Endothelial cell of umbilical vein (primary cell): ENCODE measurements at regions of chr7 and their contacts with region 1.

Region 1: GRCh38 chr7:133434055-133434865 is 181.4 kb downstream of the EXOC4 start:
- DNase-seq: peak; percentile 65
- H3K4me3 ChIP-seq: no peak overlapping the region
- H3K27ac ChIP-seq: no peak overlapping the region
- H3K4me1 ChIP-seq: peaks cover 11% of the 10 kb centered on the region
- H3K27me3 ChIP-seq: no peaks in the 10 kb centered on the region
- CTCF ChIP-seq: peak; percentile 33 to 34
- POLR2A ChIP-seq: no peak

Region 2: DNA sequence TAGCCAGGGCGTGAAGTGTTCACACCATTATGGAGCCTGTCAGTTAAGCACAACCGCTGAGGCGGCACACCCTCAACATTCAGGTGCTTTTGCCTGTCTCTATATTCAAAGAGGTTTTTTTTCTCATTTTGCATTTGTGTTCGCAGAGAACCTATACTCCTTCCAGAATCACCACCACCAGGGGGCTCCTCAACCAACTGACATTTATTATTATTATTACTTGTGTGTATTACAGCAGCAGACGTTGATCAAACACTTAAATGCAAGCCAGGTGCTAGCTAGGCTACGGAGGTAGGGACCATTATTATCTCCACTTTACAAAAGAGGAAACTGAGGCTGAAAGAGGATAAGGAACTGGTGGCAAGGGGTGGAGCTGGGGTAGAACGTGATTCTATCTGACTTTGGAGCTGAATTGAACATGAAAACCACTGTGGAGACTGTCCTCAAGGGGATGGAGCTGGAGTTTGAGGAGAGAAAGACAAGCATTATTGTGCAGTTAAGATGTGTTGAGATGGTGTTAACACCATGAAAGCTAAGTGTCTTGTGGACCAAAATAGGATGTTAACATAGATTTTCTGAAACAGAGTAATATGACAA is 724.2 kb before region 1 on chr7:
- CTCF ChIA-PET with region 1: interaction called, 104 read pairs
- POLR2A ChIA-PET with region 1: interaction called, 5 read pairs
- dilution Hi-C with region 1: no loop called
- intact Hi-C with region 1: loop called (anchors 1 kb)
- DNase-seq: peak; percentile 59
- H3K4me3 ChIP-seq: no peak overlapping the region
- H3K27ac ChIP-seq: no peak overlapping the region
- H3K4me1 ChIP-seq: no peaks in the 10 kb centered on the region
- H3K27me3 ChIP-seq: peaks cover 0 to 2% of the 10 kb centered on the region in 2 experiments
- CTCF ChIP-seq: peak; percentile 53
- POLR2A ChIP-seq: no peak

Region 3: DNA sequence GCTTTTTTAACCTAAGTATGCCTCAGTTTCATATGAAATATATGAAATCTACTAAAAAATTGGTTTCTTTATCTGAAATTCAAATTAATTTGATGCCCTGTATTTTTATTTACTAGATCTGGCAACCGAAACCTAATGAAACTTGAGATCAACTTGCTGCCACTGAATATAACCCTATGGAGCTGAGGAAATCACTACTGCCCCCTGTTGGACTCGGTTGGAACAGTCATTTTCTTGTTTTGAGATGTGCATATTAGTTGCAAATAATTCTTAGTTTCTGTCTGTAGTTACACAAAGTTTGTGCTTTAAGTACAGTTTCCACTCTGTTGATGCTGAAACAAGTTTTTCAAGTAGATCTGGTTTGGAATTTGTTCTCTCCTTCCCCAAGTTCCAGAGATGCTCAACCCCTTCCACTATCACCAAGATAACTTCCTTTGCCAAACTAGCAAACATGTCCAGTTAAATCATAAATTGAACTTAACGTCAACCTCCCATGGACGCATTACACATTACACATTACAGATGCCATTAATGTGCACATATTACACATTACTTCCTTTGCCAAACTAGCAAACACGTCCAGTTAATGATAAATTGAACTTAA is 203.6 kb before region 1 on chr7:
- CTCF ChIA-PET with region 1: interaction called, 11 read pairs
- POLR2A ChIA-PET with region 1: no interaction called
- dilution Hi-C with region 1: no loop called
- intact Hi-C with region 1: loop called (anchors 2 kb)
- DNase-seq: peak; percentile 73
- H3K4me3 ChIP-seq: no peak overlapping the region
- H3K27ac ChIP-seq: no peak overlapping the region
- H3K4me1 ChIP-seq: peaks cover 9% of the 10 kb centered on the region
- H3K27me3 ChIP-seq: peaks cover 21 to 36% of the 10 kb centered on the region in 2 experiments
- CTCF ChIP-seq: peak; percentile 60 to 62
- POLR2A ChIP-seq: no peak

Region 4: DNA sequence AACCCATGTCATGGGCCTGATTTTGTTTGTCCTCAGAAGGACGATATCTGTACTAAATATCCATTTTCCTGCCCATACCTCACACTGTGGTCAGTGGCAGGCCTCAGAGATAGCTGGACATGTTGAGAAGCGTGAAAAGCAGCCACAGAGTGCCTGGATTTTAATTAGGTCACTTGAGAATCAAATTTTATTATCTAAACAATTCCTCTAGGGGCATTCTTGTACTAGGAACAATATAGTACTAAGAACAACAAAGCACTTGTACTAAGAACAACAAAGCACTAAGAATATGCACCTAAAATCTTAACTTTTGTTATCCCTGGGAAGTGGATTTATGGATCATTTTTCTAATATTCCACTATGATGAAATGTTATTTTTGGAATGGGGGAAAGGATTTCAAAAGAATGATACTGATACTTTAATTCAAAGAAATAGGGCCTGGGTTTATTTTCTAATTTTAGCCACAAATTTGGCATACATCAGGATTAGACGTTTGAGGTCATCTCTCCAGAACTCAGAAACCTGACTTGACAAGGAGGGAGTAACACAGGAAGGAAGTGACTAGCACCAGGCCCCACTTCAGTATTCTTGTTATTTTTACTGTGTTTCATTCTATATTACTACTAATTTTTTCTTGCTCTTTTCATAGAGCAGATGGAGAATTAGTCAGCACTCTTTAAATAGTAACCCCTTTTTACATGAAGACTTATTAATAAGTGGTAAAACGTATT is 69.1 kb before region 1 on chr7:
- CTCF ChIA-PET with region 1: interaction called, 6 read pairs
- POLR2A ChIA-PET with region 1: no interaction called
- dilution Hi-C with region 1: no loop called
- intact Hi-C with region 1: loop called (anchors 1 kb)
- DNase-seq: peak; percentile 86
- H3K4me3 ChIP-seq: no peak overlapping the region
- H3K27ac ChIP-seq: peak overlapping the region; percentile 92
- H3K4me1 ChIP-seq: peaks cover 26% of the 10 kb centered on the region
- H3K27me3 ChIP-seq: no peaks in the 10 kb centered on the region
- CTCF ChIP-seq: no peak
- POLR2A ChIP-seq: no peak

Region 5: DNA sequence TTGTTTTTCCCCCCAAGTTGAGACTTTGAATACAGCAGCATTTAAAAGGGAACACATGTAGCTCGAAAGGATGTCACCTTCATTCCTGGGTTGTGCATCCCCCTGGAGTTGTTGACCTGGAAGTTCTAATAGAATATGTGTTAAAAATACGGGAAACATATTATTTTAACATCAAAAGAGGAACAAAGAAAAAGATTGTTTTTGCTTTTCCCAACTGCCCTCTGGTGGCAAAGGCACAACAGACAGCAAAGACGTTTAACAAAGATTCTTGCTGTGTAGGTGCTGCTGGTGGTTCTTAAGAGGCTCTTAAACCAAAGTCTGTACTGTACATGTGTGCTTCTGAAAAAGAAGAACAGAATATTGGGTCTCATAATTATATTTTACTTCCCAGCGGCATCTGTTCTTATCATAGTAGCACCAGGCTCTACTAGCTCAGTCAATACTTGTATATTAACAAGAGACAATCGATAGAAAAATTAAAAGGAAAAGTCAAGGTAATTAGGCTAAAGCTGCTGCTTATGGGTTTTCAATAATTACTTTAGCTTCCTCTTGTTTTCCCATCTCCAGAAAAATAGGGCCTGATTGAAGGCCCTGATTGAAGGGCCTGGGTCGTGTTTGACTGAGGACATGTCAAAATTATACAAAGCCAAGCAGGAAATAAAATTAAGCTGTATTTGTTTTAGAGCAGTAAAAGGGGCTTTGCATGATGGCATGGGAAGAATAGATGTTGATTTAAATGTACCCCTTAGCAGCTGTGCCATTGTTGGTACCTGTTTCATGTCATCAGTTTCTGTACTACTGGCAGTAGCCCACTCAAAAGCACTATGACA is 308.7 kb after region 1 on chr7:
- CTCF ChIA-PET with region 1: interaction called, 10 read pairs
- POLR2A ChIA-PET with region 1: no interaction called
- dilution Hi-C with region 1: no loop called
- intact Hi-C with region 1: loop called (anchors 5 kb)
- DNase-seq: peak; percentile 48
- H3K4me3 ChIP-seq: no peak overlapping the region
- H3K27ac ChIP-seq: no peak overlapping the region
- H3K4me1 ChIP-seq: no peaks in the 10 kb centered on the region
- H3K27me3 ChIP-seq: no peaks in the 10 kb centered on the region
- CTCF ChIP-seq: peak; percentile 34 to 58
- POLR2A ChIP-seq: no peak

Region 6: GRCh38 chr7:134327896-134328295 is 893.6 kb after region 1 on chr7:
- CTCF ChIA-PET with region 1: no interaction called
- POLR2A ChIA-PET with region 1: no interaction called
- dilution Hi-C with region 1: no loop called
- intact Hi-C with region 1: loop called (anchors 5 kb)
- DNase-seq: peak; percentile 46
- H3K4me3 ChIP-seq: no peak overlapping the region
- H3K27ac ChIP-seq: no peak overlapping the region
- H3K4me1 ChIP-seq: no peaks in the 10 kb centered on the region
- H3K27me3 ChIP-seq: peaks cover 0 to 25% of the 10 kb centered on the region in 2 experiments
- CTCF ChIP-seq: peak; percentile 46 to 47
- POLR2A ChIP-seq: no peak